ENCODE measurements at regions of chr11 and their contacts with region 1.

Region 1: DNA sequence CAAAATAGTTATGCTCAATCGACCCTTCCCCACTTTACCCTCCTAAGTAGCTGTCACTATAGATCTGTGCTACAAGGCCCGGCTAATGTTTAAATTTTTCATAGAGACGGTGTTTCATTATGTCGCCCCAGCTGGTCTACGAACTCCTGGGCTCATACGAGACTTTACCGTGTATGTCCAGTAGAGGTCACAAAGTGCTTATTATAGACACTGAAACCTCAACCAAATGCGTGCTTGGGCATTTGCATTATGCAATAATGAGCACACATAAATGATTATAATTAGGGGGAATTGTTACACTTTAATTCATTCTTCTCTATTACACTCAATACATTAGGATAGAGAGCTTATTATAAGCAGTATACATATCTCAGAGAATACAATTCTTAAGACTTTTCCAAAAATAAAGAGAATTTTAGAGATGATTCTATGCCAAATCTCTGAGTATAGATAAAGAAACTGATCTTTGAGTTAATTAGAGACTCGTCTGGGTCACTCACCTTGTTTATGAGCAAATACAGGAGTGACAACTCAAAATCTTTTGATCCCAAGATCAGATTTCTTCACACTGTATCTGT is 12.5 kb upstream of the MRPL16 start:
- DNase-seq: peak in 1 of 10 donors; percentile 22
- H3K4me3 ChIP-seq: peak overlapping the region in 2 of 59 donors; percentile 4 to 24
- H3K27ac ChIP-seq: peak overlapping the region in 7 of 59 donors; percentile 4 to 46 (median 26)
- H3K27me3 ChIP-seq: no peaks in the 10 kb centered on the region
- CTCF ChIP-seq: peak; percentile 34 to 77 (median 60)

Region 2: DNA sequence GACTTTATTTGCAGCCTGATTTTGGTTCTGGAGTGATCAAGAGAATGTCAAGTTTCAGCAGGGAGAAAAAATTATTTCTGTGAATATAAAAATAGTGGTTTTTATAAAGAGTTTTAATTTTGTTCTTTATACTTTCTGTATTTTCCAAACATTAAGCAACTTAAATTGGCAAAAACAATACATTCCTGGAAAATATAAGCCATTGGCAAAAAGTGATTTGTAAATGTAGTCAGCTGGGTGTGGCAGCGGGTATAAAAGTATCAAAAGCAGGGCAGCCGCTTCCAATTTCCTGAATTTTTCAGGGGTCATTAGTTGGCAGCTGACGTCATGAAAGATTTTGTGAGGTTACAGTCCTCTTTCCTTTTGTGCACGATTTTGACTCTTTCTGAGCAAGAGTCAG is 55.4 kb after region 1 on chr11 and contains the start of gene OOSP3:
- intact Hi-C with region 1: no loop called
- DNase-seq: no peak
- H3K4me3 ChIP-seq: no peak within 1 kb of the TSS
- H3K27ac ChIP-seq: no peak within 1 kb of the TSS
- H3K27me3 ChIP-seq: peaks cover 0 to 3% (median 0%) of the 10 kb centered on the region in 45 donors
- CTCF ChIP-seq: no peak
- total RNA-seq, gene OOSP3: 0.56 to 1.4 (median 0.77) TPM in 25 of 120 experiments, not detected in the others

Region 3: GRCh38 chr11:60121264-60121663 is 298.2 kb after region 1 on chr11:
- intact Hi-C with region 1: loop called in 1 of 2 experiments (anchors 10 kb)
- DNase-seq: no peak
- H3K4me3 ChIP-seq: no peak overlapping the region
- H3K27ac ChIP-seq: no peak overlapping the region
- H3K27me3 ChIP-seq: peaks cover 0 to 5% (median 0%) of the 10 kb centered on the region in 45 donors
- CTCF ChIP-seq: no peak

Region 4: GRCh38 chr11:60130496-60130895 is 307.4 kb after region 1 on chr11:
- intact Hi-C with region 1: loop called (anchors 5 to 10 kb)
- DNase-seq: peak in 2 of 10 donors; percentile 8 to 20
- H3K4me3 ChIP-seq: no peak overlapping the region
- H3K27ac ChIP-seq: no peak overlapping the region
- H3K27me3 ChIP-seq: no peaks in the 10 kb centered on the region
- CTCF ChIP-seq: peak in 53 of 56 donors; percentile 13 to 65 (median 42)

Region 5: DNA sequence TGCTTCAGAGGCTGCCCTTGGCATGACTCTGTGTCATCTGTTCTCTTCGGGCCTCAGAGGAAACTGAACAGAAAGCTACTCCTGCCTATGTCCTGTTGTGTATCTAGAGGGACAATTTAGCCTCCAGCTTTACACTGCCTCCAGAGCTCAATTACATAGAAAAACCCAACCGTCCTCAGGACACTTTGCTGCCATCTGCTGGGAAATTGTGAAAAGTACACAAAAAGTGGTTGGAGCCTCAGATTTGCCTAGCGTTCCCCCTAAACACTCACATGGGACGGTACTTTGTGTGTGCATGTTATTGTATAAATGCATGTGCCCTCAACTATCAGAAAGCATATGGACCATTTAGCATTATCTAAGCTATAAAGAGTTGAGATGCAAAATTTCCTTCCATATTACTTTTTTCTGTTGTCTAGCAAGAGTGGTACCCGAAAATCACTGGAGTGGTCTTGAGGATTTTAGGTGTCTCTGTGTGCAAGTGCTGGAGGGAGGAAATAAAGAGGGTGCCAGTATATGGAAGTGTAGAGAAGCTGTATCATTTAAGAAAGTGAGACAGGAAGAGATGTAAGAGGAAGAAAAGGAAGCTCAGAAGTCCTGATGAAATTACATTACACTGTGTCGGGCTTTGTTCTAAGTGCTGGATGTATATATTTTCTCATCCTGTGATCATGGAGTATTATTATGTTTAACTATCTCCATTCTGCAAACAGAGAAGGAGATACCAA is 428.6 kb after region 1 on chr11:
- intact Hi-C with region 1: loop called (anchors 5 kb)
- DNase-seq: no peak
- H3K4me3 ChIP-seq: no peak overlapping the region
- H3K27ac ChIP-seq: no peak overlapping the region
- H3K27me3 ChIP-seq: peaks cover 0 to 8% (median 0%) of the 10 kb centered on the region in 45 donors
- CTCF ChIP-seq: peak in 40 of 56 donors; percentile 10 to 77 (median 49)